Dorsolateral prefrontal cortex (tissue), 120 donors: ENCODE measurements at regions of chr3 and their contacts with region 1.

Region 1: DNA sequence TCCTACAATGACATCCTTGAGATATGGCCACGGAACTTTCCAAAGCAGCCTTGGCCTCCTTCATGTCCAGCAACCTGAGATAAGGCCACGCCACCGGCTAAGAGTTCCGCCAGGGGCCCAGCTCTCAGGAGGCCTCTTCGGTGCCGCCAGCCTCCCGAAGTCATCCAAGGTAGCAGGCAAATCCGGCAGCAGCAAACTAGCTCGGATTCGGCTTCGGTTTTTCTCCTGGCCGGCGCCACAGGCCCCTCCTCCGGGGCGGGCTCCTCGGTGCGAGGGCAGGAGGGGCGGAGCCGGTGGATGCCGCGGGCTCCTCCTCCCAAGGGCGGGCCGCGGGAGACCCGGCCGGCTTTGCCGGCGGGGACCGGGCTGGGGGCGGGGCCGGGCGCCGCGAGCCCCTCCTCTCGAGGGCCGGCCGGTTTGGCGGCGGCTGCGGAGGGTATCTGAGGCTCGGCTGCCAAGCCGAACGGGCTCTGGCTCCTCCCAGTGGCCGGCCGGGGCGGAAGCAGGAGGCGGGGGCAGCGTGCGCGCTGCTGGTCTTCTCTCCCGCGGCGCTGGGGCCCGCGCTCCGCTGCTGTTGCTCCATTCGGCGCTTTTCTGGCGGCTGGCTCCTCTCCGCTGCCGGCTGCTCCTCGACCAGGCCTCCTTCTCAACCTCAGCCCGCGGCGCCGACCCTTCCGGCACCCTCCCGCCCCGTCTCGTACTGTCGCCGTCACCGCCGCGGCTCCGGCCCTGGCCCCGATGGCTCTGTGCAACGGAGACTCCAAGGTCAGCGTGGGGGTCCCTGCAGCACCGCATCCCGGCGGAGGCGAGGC is at the start of gene GMPS:
- DNase-seq: peak; percentile 81 to 98 (median 92)
- H3K4me3 ChIP-seq: peak within 1 kb of the TSS; percentile 70 to 99 (median 95)
- H3K27ac ChIP-seq: peak within 1 kb of the TSS; percentile 73 to 98 (median 94)
- H3K27me3 ChIP-seq: no peaks in the 10 kb centered on the region
- CTCF ChIP-seq: peak in 55 of 56 donors; percentile 48 to 93 (median 73)
- total RNA-seq, gene GMPS: 33.5 to 67.3 (median 51.5) TPM

Region 2: GRCh38 chr3:155744626-155745324 is 125.6 kb before region 1 on chr3 and contains the start of gene PLCH1:
- intact Hi-C with region 1: loop called (anchors 5 kb)
- DNase-seq: peak in 9 of 10 donors; percentile 38 to 73 (median 59)
- H3K4me3 ChIP-seq: peak within 1 kb of the TSS; percentile 49 to 92 (median 76)
- H3K27ac ChIP-seq: peak within 1 kb of the TSS in 17 of 59 donors; percentile 0 to 71 (median 19)
- H3K27me3 ChIP-seq: no peaks in the 10 kb centered on the region
- CTCF ChIP-seq: no peak
- total RNA-seq, gene PLCH1: 7.6 to 36.4 (median 17.8) TPM

Region 3: DNA sequence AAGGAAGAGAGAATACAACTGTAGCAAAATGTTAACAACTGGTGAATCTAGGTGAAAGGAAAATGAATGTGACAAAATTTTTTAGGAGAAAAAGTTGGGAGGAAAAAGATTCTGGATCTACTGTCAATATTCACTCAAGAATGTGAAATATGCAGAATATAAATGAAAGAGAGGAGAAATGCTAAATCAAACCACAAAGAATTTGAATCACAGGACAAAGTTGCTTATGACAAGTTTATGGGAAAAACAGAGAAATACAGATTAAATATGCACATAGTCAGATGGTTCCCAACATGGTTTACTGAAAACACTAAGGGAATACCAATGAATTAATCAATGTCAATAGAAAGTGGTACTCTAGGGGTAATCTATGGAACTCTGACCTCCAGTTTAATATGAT is 91.9 kb before region 1 on chr3:
- intact Hi-C with region 1: no loop called
- DNase-seq: no peak
- H3K4me3 ChIP-seq: no peak overlapping the region
- H3K27ac ChIP-seq: no peak overlapping the region
- H3K27me3 ChIP-seq: no peaks in the 10 kb centered on the region
- CTCF ChIP-seq: no peak

Region 4: GRCh38 chr3:155805802-155806618 is 64.3 kb before region 1 on chr3 and contains the start of gene C3orf33:
- intact Hi-C with region 1: loop called (anchors 2 to 5 kb)
- DNase-seq: peak; percentile 36 to 86 (median 64)
- H3K4me3 ChIP-seq: peak within 1 kb of the TSS; percentile 62 to 93 (median 82)
- H3K27ac ChIP-seq: peak within 1 kb of the TSS; percentile 50 to 96 (median 87)
- H3K27me3 ChIP-seq: no peaks in the 10 kb centered on the region
- CTCF ChIP-seq: peak; percentile 56 to 97 (median 82)
- total RNA-seq, gene C3orf33: 4.2 to 12.5 (median 7.3) TPM

Region 5: DNA sequence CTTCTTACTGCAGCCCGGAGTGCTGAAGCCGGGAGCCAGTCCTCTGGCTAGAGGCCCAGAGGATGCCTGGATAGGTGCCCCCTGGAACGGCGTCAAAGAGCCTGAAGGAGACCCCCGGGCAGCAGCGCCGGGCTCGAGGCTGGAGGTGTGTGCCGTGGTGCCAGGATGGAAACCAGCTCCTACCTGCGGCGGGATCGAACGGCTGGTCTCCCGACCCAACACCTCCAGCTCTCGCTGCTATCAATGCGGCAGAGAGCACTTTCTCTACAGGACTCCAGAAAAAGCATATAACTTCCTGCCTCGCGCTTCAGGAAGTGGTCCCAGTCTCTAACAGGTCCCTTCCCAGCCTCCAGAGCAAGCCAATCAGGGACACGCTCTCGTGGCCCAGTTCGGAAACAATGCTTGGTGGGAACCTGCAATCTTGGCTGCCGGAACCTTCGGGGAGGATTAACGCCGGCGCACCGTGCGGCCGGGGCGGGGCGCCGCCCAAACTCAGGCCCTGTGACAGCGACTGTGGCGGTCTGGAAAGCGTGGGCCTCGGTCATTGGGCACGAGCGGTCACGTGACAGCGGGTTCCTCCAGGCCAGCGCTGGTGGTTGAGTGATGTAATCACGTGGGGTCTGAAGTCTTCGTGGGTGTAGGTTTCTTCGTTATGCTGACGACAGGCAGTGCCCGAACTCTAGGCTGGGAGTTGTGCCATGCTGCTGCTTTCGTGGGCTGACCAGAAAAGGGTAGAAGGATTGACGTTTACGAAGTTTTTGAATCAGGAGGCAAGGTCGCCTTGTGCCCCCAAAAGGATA is 16.0 kb before region 1 on chr3 and contains the start of gene SLC33A1:
- intact Hi-C with region 1: loop called (anchors 1 kb)
- DNase-seq: peak; percentile 99 to 100 (median 100)
- H3K4me3 ChIP-seq: peak within 1 kb of the TSS; percentile 58 to 100 (median 93)
- H3K27ac ChIP-seq: peak within 1 kb of the TSS; percentile 58 to 99 (median 95)
- H3K27me3 ChIP-seq: no peaks in the 10 kb centered on the region
- CTCF ChIP-seq: peak in 44 of 56 donors; percentile 5 to 60 (median 30)
- total RNA-seq, gene SLC33A1: 18.5 to 34.5 (median 25.1) TPM

Region 6: DNA sequence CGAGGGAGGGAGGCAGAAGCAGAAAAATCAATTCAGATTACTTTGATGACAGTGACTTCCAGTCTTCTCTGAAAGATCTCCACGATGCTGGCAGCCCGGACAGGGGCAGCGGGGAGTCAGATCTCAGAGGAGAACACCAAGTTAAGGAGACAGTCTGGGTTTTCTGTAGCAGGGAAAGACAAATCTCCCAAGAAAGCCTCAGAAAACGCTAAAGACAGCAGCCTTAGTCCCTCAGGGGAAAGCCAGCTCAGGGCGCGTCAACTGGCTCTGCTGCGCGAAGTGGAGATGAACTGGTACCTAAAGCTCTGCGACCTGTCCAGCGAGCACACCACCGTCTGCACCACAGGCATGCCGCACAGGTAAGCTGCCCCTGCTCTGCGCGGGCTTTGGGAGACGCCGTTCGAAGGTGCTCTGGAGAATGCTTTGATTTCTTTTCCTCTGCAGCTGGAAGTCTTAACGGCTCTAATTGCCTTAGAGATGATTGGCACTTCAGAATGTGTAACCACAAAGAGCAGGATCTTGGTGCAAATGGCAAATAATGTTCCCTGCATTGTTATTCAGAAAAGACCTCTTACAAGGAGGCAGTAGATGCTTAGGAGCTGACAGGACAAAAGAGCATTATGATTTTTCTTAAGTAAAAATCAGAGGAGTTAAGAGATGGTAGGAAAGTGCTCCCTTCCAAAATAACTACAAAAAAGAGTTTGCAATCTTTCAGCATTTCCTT is 250.4 kb after region 1 on chr3 and contains the start of gene KCNAB1:
- intact Hi-C with region 1: no loop called
- DNase-seq: no peak
- H3K4me3 ChIP-seq: peak within 1 kb of the TSS in 4 of 59 donors; percentile 8 to 22 (median 20)
- H3K27ac ChIP-seq: no peak within 1 kb of the TSS
- H3K27me3 ChIP-seq: peaks cover 0 to 4% (median 0%) of the 10 kb centered on the region in 45 donors
- CTCF ChIP-seq: no peak
- total RNA-seq, gene KCNAB1: 18.5 to 71.0 (median 39.7) TPM